Gastrocnemius medialis (tissue), 4 donors: ENCODE measurements at regions of chr6 and their contacts with region 1.

Region 1: DNA sequence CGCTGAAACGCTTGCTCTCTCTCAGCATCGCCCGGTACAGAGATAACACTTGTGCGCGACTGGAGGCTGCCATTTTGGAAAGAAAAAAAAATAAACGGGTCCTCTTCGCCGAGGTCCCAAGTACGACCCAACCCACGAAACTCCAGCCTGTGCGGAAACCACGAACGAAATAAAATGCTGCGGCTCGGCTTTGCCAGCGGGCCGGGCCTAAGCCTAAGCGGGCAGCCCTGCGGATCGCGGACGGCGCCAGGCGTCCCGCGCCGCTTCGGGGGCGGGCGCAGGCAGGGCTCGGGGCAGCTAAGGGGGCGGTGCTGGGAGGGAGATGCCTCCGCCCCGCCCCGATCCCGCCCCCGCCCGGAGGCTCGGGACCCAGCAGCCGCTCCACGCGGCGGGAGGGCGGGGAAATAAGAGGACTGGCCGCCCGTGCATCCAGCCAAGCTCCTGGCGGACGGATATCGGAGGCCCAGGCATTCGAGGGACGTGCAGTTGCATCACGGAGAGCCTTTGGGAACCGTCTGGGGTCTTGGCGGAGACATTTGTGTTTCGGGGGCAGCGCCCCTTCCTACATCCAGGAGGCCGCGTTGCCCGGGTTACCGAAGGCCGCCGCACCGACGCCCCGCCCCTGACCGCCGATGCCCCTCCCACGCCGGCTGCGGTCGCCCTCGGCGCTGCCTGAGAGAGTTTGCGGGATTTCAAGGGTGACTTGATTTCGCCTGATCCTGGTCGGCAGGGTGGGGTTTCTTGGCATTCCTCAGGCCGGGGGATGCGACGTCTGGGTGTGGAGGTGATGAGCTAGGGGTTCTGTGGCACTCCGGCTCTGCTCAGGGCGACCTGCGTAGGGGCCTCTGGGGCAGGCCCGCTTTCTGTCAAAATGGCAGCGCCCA is at the starts of genes FARS2 and LYRM4:
- DNase-seq: peak; percentile 64 to 81
- ATAC-seq: peak; percentile 93 to 94
- H3K4me3 ChIP-seq: peak within 1 kb of the TSS; percentile 58 to 97 (median 86)
- H3K27ac ChIP-seq: peak within 1 kb of the TSS; percentile 85 to 99 (median 94)
- H3K4me1 ChIP-seq: peaks cover 15 to 24% of the 10 kb centered on the region in 2 donors
- H3K27me3 ChIP-seq: no peaks in the 10 kb centered on the region
- CTCF ChIP-seq: peak in 2 of 5 experiments; percentile 36 to 45
- POLR2A ChIP-seq: peak; percentile 60 to 68
- total RNA-seq, gene FARS2: 13.6 to 24.0 (median 15.8) TPM
- total RNA-seq, gene LYRM4: 8.4 to 20.1 (median 12.2) TPM

Region 2: DNA sequence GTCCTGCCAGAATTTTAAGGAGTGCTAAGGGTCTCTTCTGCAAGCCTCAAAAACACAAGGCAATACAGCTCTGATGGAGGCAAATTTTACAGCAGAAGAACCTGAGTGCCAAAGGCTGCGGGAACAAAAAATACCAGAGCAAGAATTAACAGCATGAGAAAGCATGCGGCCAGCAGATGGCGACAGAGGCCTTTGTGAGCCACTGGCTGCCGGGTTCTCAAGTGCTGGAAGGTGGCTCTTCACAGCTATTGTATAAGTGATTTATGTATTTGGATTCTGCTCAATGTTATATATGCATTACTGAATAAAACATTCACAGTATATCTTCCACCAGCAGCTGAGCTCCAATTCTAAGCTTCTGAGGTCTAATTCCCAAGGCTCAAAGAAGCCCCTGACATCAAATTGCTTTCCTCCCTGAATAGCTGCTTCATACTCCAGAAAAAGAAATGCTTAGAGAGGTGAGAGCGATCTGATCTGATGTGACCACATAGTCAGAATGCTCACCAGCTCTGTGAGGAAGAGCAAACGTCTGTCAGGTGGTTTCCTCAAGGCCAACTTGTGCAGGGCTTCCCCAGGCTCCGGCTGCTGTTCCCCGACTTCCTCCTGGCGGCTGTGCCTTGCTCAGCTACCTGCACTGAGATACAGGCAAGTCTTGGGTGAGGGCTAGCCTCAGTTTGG is 117.1 kb before region 1 on chr6:
- in situ Hi-C with region 1: no loop called
- intact Hi-C with region 1: loop called (anchors 5 kb)
- DNase-seq: peak; percentile 59 to 72
- ATAC-seq: peak; percentile 82 to 90
- H3K4me3 ChIP-seq: no peak overlapping the region
- H3K27ac ChIP-seq: no peak overlapping the region
- H3K4me1 ChIP-seq: peaks cover 4 to 10% of the 10 kb centered on the region in 2 donors
- H3K27me3 ChIP-seq: no peaks in the 10 kb centered on the region
- CTCF ChIP-seq: peak; percentile 81 to 96 (median 87)
- POLR2A ChIP-seq: no peak